Gastrocnemius medialis (tissue), 4 donors: ENCODE measurements at regions of chr3 and their contacts with region 1.

Region 1: DNA sequence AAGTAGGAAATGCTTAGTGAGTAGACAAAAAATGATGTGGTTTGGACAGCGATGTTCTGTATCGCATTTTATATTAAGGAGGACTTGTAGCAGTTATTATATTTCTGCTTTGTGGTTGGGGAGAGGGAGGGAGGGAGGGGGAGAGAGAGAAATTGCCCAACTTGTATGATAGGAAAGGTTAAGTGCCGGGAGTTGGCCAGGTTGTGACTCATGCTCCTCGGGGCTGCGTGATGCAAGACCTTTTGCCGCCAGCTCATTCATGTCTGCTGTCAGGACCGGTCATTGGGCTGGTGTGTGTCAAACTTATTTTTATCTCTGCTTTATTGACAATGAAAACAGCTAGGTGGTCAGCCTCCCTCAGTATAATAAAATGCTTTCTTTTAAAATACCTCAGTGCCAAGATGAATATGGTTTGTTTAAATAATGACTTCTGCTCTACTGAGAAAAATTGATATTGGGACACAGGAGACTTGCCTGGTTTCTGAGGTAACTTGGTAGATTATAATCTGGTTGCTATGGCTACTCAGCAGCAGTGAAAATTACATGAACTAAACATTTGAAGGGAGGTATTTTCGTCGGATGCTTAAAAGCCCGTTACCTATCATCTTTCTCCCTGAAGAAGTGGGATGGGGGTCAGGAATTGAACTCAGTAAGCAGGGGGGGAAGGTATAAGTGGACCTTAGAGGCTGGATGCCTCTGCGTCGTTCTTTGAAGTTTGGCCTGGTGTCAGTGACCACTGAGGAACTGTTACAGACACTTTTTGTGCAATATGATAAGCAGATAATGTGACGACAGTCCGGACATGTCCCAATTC is 90.7 kb downstream of the FNDC3B start:
- DNase-seq: peak; percentile 97 to 99
- ATAC-seq: peak; percentile 83 to 87
- H3K4me3 ChIP-seq: peak overlapping the region; percentile 14 to 18 (median 18)
- H3K27ac ChIP-seq: peak overlapping the region; percentile 91 to 99 (median 94)
- H3K4me1 ChIP-seq: peaks cover 87 to 88% of the 10 kb centered on the region in 2 donors
- H3K27me3 ChIP-seq: no peaks in the 10 kb centered on the region
- CTCF ChIP-seq: no peak
- POLR2A ChIP-seq: peak in 1 of 2 donors; percentile 43

Region 2: GRCh38 chr3:172046268-172046915 is 83.7 kb before region 1 on chr3:
- in situ Hi-C with region 1: no loop called
- intact Hi-C with region 1: no loop called
- DNase-seq: no peak
- ATAC-seq: no peak
- H3K4me3 ChIP-seq: no peak overlapping the region
- H3K27ac ChIP-seq: peak overlapping the region; percentile 10 to 100 (median 34)
- H3K4me1 ChIP-seq: peaks cover 57 to 66% of the 10 kb centered on the region in 2 donors
- H3K27me3 ChIP-seq: no peaks in the 10 kb centered on the region
- CTCF ChIP-seq: no peak
- POLR2A ChIP-seq: no peak

Region 3: GRCh38 chr3:172171396-172172075 is 41.5 kb after region 1 on chr3:
- in situ Hi-C with region 1: no loop called
- intact Hi-C with region 1: loop called (anchors 2 kb)
- DNase-seq: no peak
- ATAC-seq: no peak
- H3K4me3 ChIP-seq: no peak overlapping the region
- H3K27ac ChIP-seq: peak overlapping the region in 1 of 4 donors; percentile 51
- H3K4me1 ChIP-seq: peaks cover 83 to 94% of the 10 kb centered on the region in 2 donors
- H3K27me3 ChIP-seq: no peaks in the 10 kb centered on the region
- CTCF ChIP-seq: no peak
- POLR2A ChIP-seq: no peak

Region 4: DNA sequence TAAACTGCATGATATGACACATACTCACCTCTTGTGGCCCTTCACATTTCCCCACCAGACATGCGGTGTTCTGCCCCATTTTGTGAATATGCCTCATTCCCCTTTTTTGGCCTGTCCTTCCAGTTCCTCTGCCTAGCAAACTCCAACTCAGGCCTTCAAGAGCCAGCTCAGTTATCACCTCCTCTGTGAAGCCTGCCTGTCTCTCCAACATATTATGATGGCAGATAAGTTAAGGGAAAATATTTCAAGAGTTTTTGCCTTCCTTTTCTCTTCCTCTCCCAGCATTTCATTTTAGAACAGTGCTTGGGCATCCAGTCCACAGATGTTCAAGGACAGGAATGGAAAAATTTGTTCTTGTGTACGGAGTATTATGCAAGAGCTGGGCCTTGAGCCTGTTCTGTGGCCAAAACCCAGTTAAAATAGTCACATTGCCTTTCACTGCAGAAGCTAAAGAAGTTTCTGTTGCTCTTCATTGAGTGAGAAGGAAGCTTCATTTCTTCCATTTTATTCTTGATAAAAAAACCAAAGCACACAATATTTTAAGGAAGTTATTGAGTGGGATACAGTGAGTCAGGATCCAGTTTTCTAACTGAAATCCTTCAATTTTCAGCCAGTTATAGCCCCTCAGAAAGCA is 126.1 kb after region 1 on chr3:
- in situ Hi-C with region 1: no loop called
- intact Hi-C with region 1: no loop called
- DNase-seq: peak; percentile 56 to 70
- ATAC-seq: peak; percentile 93
- H3K4me3 ChIP-seq: peak overlapping the region in 1 of 4 donors; percentile 10
- H3K27ac ChIP-seq: peak overlapping the region; percentile 70 to 84 (median 76)
- H3K4me1 ChIP-seq: peaks cover 52 to 65% of the 10 kb centered on the region in 2 donors
- H3K27me3 ChIP-seq: no peaks in the 10 kb centered on the region
- CTCF ChIP-seq: no peak
- POLR2A ChIP-seq: no peak

Region 5: DNA sequence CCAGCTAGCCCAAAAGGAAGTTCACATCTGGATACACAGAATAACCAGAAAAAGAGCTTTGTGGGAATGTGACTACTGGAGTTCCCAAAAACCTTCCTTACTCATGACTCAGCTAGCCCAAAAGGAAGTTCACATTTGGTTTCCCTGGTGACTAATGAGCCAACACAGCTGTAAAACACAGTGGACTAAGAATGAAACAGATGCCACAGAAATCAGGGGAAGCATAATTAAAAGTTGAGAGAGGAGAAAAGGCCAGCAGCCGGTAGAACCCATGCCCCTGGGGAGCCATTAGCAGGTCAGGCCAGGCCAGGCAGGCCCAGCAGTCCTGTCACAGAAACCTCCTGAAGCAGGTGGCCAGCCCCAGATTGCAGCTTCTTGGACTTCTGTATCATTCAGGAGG is 187.9 kb after region 1 on chr3:
- in situ Hi-C with region 1: no loop called
- intact Hi-C with region 1: loop called (anchors 2 kb)
- DNase-seq: peak in 1 of 2 donors; percentile 41
- ATAC-seq: peak; percentile 44 to 48
- H3K4me3 ChIP-seq: no peak overlapping the region
- H3K27ac ChIP-seq: peak overlapping the region; percentile 79 to 88 (median 82)
- H3K4me1 ChIP-seq: peaks cover 92 to 96% of the 10 kb centered on the region in 2 donors
- H3K27me3 ChIP-seq: no peaks in the 10 kb centered on the region
- CTCF ChIP-seq: no peak
- POLR2A ChIP-seq: no peak

Region 6: DNA sequence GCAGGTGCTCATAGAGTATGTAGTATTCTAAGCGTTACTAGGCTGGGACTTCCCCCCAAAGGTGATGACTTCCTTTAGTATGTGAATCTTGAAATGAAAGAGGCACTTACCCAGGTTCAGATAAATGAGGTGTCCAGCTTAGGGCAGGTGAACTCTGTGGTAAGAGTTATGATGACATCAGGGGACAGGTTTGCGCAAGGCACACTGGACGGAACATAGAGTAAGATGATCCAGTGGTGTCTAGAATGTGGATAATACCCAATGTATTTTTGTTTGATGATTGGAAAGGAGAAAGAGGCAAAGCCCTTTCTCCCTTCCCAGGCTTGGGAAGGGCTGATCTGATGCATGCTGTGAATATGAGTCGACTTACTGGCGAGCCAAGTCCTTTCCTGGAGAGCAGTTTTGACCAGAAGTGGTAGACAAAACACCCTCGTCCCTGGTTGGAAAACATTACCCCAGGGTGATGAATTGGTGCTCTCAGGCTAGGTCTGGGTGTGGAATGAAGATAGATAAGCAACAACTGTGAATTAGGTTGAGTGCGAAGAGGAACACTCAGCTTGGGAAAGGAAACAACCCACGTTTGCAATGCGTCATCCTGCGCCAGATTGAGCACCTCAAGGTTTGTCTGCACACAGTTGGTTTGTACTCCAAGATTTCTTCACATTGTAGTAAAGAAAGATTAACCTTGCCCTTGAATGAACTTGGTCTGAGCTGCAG is 194.0 kb after region 1 on chr3:
- in situ Hi-C with region 1: no loop called
- intact Hi-C with region 1: loop called (anchors 1 kb)
- DNase-seq: peak; percentile 78 to 90
- ATAC-seq: peak; percentile 88 to 93
- H3K4me3 ChIP-seq: no peak overlapping the region
- H3K27ac ChIP-seq: peak overlapping the region; percentile 79 to 88 (median 82)
- H3K4me1 ChIP-seq: peaks cover 54 to 56% of the 10 kb centered on the region in 2 donors
- H3K27me3 ChIP-seq: no peaks in the 10 kb centered on the region
- CTCF ChIP-seq: no peak
- POLR2A ChIP-seq: no peak

Region 7: GRCh38 chr3:172370419-172370818 is 240.3 kb after region 1 on chr3:
- in situ Hi-C with region 1: no loop called
- intact Hi-C with region 1: loop called (anchors 1 kb)
- DNase-seq: no peak
- ATAC-seq: no peak
- H3K4me3 ChIP-seq: no peak overlapping the region
- H3K27ac ChIP-seq: peak overlapping the region; percentile 80 to 89 (median 84)
- H3K4me1 ChIP-seq: peaks cover 48 to 57% of the 10 kb centered on the region in 2 donors
- H3K27me3 ChIP-seq: no peaks in the 10 kb centered on the region
- CTCF ChIP-seq: no peak
- POLR2A ChIP-seq: no peak